ENCODE measurements at regions of chr9 and their contacts with region 1.

Region 1: GRCh38 chr9:137302176-137302994 is at the start of gene NRARP:
- DNase-seq: peak; percentile 82
- H3K4me3 ChIP-seq: peak within 1 kb of the TSS; percentile 61 to 83 (median 70)
- H3K27ac ChIP-seq: peak within 1 kb of the TSS; percentile 93
- H3K4me1 ChIP-seq: peaks cover 64% of the 10 kb centered on the region
- H3K27me3 ChIP-seq: no peaks in the 10 kb centered on the region
- CTCF ChIP-seq: peak; percentile 55 to 76
- POLR2A ChIP-seq: peak; percentile 97
- total RNA-seq, gene NRARP: 50.0 and 61.0 TPM in 2 replicates

Region 2: DNA sequence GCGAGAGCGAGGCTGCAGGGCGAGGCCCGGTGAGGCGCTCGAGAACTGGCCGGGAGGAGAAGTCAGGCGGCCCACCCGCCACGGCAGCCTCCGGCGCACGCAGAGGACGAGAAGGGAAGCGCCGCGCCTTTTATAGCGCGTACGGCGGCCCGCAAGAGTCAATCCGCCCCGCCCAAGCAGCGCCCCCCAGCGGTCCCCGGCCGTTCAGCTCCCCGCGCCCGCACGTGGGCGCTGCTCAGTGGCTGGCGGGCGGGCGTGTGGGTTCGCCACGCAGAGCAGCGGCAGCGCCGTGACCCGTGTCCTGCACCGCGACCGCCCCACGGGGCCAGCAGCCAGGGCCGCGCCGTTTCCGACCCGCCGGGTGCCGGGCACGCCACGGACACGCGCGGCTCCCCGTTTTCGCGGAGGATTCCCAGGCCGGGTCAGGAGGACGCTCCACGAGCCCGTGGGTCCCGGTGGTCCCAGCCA is 574.3 kb before region 1 on chr9:
- CTCF ChIA-PET with region 1: no interaction called
- POLR2A ChIA-PET with region 1: no interaction called
- dilution Hi-C with region 1: no loop called
- intact Hi-C with region 1: no loop called
- DNase-seq: peak; percentile 84
- H3K4me3 ChIP-seq: peak overlapping the region; percentile 11 to 89 (median 70)
- H3K27ac ChIP-seq: peak overlapping the region; percentile 41
- H3K4me1 ChIP-seq: peaks cover 32% of the 10 kb centered on the region
- H3K27me3 ChIP-seq: no peaks in the 10 kb centered on the region
- CTCF ChIP-seq: peak; percentile 96
- POLR2A ChIP-seq: peak; percentile 100

Region 3: DNA sequence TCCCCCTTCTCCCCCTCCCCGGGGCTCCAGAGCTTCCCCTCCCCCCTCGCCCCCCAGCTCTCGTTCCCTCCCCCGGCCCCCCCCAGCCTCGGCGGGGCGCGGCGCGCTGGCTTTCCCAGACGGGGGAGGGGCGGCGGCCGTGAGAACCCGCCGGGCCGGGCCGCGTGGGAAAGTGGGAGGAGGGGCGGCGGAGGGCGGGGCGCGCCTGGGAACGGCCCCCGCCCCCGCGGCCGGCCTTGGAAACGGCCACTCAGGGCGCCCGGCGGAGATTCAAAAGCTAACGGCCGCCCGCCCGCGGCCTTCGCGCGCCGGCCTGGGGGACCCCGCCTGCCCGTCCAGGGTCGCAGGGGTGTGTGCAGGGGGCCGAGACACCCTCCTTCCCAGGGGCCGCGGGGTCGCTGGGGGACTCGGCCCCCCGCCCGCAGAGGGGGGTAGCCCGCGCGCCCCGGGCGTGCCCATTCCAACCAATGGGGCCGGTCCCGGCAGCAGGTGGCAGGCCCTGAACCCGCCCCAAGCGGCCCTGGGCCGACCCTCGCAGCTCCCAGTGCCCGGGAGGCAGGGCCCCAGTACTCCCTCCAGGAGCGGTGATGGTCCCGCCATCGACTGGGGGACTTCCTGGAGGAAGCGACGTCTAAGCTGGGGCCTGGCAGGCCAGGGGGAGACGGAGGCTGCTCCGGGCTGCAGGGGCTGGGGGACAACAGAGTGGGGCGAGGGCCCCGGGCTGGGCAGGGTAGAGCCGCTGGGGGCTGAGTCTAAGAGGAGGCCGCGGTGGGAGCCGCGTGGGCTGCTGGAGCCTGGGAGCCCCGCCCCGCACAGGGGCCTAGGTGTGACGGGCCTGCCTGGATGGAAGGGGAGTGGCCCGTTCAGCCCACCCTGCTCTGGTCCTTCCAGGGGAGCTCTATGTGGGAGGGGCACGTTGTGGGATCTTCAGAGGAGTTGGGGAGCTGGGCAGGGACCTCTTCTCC is 13.9 kb after region 1 on chr9:
- CTCF ChIA-PET with region 1: interaction called, 33 read pairs
- POLR2A ChIA-PET with region 1: interaction called, 5 read pairs
- dilution Hi-C with region 1: no loop called
- intact Hi-C with region 1: loop called (anchors 1 kb)
- DNase-seq: peak; percentile 65
- H3K4me3 ChIP-seq: peak overlapping the region in 1 of 3 experiments; percentile 32
- H3K27ac ChIP-seq: peak overlapping the region; percentile 71
- H3K4me1 ChIP-seq: peaks cover 21% of the 10 kb centered on the region
- H3K27me3 ChIP-seq: no peaks in the 10 kb centered on the region
- CTCF ChIP-seq: no peak
- POLR2A ChIP-seq: no peak

Region 4: GRCh38 chr9:137353223-137354152 is 51.1 kb after region 1 on chr9:
- CTCF ChIA-PET with region 1: interaction called, 7 read pairs
- POLR2A ChIA-PET with region 1: no interaction called
- dilution Hi-C with region 1: no loop called
- intact Hi-C with region 1: loop called (anchors 2 kb)
- DNase-seq: peak; percentile 62
- H3K4me3 ChIP-seq: no peak overlapping the region
- H3K27ac ChIP-seq: peak overlapping the region; percentile 84
- H3K4me1 ChIP-seq: peaks cover 16% of the 10 kb centered on the region
- H3K27me3 ChIP-seq: no peaks in the 10 kb centered on the region
- CTCF ChIP-seq: no peak
- POLR2A ChIP-seq: no peak

Region 5: DNA sequence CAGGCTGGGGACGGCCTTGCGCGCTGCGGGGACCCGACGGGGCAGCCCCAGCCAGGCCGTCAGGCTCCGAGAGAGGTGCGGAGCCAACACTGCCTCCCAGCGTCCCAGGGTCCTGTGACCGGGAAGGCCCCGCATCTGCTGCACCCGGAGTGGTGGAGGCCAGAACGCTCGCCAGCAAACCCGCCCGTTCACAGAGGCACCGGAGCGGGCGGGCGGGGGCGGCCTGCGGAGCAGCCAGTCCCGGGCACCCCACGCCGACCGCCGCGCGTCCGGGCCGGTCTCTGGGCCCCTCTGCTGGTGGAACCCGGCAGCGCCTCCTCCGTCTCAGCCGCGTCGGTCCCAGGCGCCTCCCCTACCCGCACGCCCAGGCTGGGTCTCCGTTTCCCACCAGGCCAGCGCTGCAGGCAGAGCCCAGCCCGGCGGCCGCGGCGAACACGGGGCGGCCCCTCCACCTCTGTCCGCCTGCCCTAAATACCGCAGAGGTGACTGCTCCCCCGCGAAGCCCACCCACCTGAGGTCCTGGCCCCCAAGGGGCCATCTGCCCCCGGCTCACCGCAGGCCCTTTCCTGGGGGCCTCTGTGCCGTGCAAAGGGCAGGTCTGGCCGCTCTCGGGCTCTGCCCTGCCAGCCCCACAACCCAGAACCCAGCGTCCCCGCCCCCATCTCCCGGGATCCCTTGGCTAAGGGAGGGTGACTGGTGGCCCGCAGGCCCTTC is 104.6 kb after region 1 on chr9:
- CTCF ChIA-PET with region 1: interaction called, 36 read pairs
- POLR2A ChIA-PET with region 1: interaction called, 3 read pairs
- dilution Hi-C with region 1: no loop called
- intact Hi-C with region 1: loop called (anchors 1 kb)
- DNase-seq: peak; percentile 85
- H3K4me3 ChIP-seq: peak overlapping the region in 1 of 3 experiments; percentile 17
- H3K27ac ChIP-seq: no peak overlapping the region
- H3K4me1 ChIP-seq: peaks cover 24% of the 10 kb centered on the region
- H3K27me3 ChIP-seq: no peaks in the 10 kb centered on the region
- CTCF ChIP-seq: peak; percentile 83 to 87
- POLR2A ChIP-seq: no peak

Region 6: DNA sequence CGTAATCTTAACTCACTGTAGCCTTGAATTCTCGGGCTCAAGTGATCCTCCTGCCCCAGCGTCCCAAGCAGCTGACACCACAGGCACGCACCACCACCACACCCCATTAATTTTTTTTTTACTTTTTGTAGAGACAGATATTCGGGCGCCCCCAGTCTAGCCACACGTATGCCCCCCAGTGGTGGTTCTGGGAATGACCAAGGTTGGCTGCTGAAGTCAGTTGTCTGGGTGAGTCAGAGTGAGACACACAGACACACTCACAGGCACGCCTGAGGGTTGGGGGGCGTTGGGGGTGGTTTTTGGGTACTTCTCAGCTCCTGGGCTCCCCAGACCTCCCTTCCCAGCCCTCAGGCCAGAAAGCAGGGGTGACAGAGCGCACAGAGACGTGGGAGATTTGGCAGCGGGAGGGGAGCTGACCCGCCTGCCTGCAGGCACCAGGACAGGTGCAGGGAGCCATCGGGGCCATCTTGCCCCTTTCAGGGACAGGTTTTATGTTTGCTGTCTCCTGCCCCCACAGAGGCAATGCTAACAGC is 143.0 kb after region 1 on chr9:
- CTCF ChIA-PET with region 1: interaction called, 15 read pairs
- POLR2A ChIA-PET with region 1: no interaction called
- dilution Hi-C with region 1: no loop called
- intact Hi-C with region 1: no loop called
- DNase-seq: peak; percentile 78
- H3K4me3 ChIP-seq: no peak overlapping the region
- H3K27ac ChIP-seq: no peak overlapping the region
- H3K4me1 ChIP-seq: no peaks in the 10 kb centered on the region
- H3K27me3 ChIP-seq: no peaks in the 10 kb centered on the region
- CTCF ChIP-seq: peak; percentile 77 to 87
- POLR2A ChIP-seq: no peak

Measured in endothelial cell of umbilical vein (primary cell).